ENCODE measurements at regions of chr2 and their contacts with region 1.

Region 1: GRCh38 chr2:160429248-160430000 is 64.2 kb downstream of the RBMS1 start:
- DNase-seq: peak; percentile 77
- H3K4me3 ChIP-seq: no peak overlapping the region
- H3K27ac ChIP-seq: peak overlapping the region; percentile 89
- H3K4me1 ChIP-seq: peaks cover 49% of the 10 kb centered on the region
- H3K27me3 ChIP-seq: no peaks in the 10 kb centered on the region
- CTCF ChIP-seq: peak; percentile 19 to 22
- POLR2A ChIP-seq: no peak

Region 2: GRCh38 chr2:160157861-160158829 is 271.3 kb before region 1 on chr2:
- CTCF ChIA-PET with region 1: no interaction called
- POLR2A ChIA-PET with region 1: no interaction called
- dilution Hi-C with region 1: no loop called
- intact Hi-C with region 1: loop called (anchors 5 kb)
- DNase-seq: no peak
- H3K4me3 ChIP-seq: no peak overlapping the region
- H3K27ac ChIP-seq: no peak overlapping the region
- H3K4me1 ChIP-seq: peaks cover 18% of the 10 kb centered on the region
- H3K27me3 ChIP-seq: no peaks in the 10 kb centered on the region
- CTCF ChIP-seq: no peak
- POLR2A ChIP-seq: no peak

Region 3: GRCh38 chr2:160306985-160307384 is 122.4 kb before region 1 on chr2:
- CTCF ChIA-PET with region 1: no interaction called
- POLR2A ChIA-PET with region 1: no interaction called
- dilution Hi-C with region 1: no loop called
- intact Hi-C with region 1: no loop called
- DNase-seq: no peak
- H3K4me3 ChIP-seq: no peak overlapping the region
- H3K27ac ChIP-seq: no peak overlapping the region
- H3K4me1 ChIP-seq: peaks cover 22% of the 10 kb centered on the region
- H3K27me3 ChIP-seq: no peaks in the 10 kb centered on the region
- CTCF ChIP-seq: no peak
- POLR2A ChIP-seq: no peak

Region 4: DNA sequence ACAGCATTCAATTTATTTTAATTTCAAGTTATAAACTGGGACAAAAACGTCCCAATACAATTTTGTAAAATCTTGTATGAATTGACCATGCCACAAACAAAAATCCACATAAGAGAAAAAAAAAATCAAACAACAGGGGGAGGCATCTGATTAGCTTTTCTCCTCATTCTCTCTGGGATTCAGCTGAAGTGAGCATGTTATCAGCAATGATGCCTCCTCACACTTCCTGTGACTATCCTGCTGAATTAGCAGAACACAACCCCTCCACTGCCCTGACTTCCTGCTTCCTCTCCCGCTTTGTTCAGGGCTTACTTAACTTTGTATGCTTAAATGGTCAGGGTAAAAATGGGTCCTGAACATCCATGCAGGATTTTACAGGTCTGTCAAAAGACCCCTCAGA is 97.1 kb before region 1 on chr2:
- CTCF ChIA-PET with region 1: interaction called, 31 read pairs
- POLR2A ChIA-PET with region 1: interaction called, 3 read pairs
- dilution Hi-C with region 1: no loop called
- intact Hi-C with region 1: loop called (anchors 5 kb)
- DNase-seq: peak; percentile 70
- H3K4me3 ChIP-seq: no peak overlapping the region
- H3K27ac ChIP-seq: no peak overlapping the region
- H3K4me1 ChIP-seq: peaks cover 35% of the 10 kb centered on the region
- H3K27me3 ChIP-seq: no peaks in the 10 kb centered on the region
- CTCF ChIP-seq: peak in 1 of 2 donors; percentile 1
- POLR2A ChIP-seq: no peak

Region 5: GRCh38 chr2:160406591-160407392 is 22.6 kb before region 1 on chr2:
- CTCF ChIA-PET with region 1: interaction called, 21 read pairs
- POLR2A ChIA-PET with region 1: interaction called, 4 read pairs
- dilution Hi-C with region 1: no loop called
- intact Hi-C with region 1: loop called (anchors 2 kb)
- DNase-seq: peak; percentile 77
- H3K4me3 ChIP-seq: peak overlapping the region; percentile 89 to 98 (median 95)
- H3K27ac ChIP-seq: peak overlapping the region; percentile 90
- H3K4me1 ChIP-seq: peaks cover 72% of the 10 kb centered on the region
- H3K27me3 ChIP-seq: no peaks in the 10 kb centered on the region
- CTCF ChIP-seq: no peak
- POLR2A ChIP-seq: peak; percentile 49

Region 6: DNA sequence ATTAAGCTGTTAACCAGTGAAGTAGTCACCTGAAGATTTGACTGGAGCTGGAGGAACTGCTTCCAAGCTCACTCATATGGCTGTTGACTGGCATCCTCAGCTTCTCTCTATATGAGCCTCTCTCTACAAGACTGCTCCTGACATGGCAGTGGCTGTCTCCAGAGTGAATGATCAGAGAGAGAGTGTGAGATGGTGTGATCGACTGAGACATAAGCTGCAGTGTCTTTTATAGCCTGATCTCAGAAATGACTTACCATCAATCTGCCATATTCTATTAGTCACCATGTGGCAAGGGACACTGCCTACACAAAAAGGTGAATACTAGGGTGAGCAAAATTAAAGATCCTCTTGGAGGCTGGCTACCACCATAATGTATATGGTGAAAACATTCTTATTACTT is 71.9 kb after region 1 on chr2:
- CTCF ChIA-PET with region 1: no interaction called
- POLR2A ChIA-PET with region 1: no interaction called
- dilution Hi-C with region 1: no loop called
- intact Hi-C with region 1: no loop called
- DNase-seq: no peak
- H3K4me3 ChIP-seq: no peak overlapping the region
- H3K27ac ChIP-seq: no peak overlapping the region
- H3K4me1 ChIP-seq: peaks cover 9% of the 10 kb centered on the region
- H3K27me3 ChIP-seq: no peaks in the 10 kb centered on the region
- CTCF ChIP-seq: no peak
- POLR2A ChIP-seq: no peak

Region 7: GRCh38 chr2:160666154-160667060 is 237.0 kb after region 1 on chr2:
- CTCF ChIA-PET with region 1: interaction called, 11 read pairs
- POLR2A ChIA-PET with region 1: no interaction called
- dilution Hi-C with region 1: no loop called
- intact Hi-C with region 1: no loop called
- DNase-seq: peak; percentile 99
- H3K4me3 ChIP-seq: peak overlapping the region in 1 of 3 experiments; percentile 33
- H3K27ac ChIP-seq: peak overlapping the region; percentile 89
- H3K4me1 ChIP-seq: peaks cover 14% of the 10 kb centered on the region
- H3K27me3 ChIP-seq: no peaks in the 10 kb centered on the region
- CTCF ChIP-seq: no peak
- POLR2A ChIP-seq: no peak

Region 8: DNA sequence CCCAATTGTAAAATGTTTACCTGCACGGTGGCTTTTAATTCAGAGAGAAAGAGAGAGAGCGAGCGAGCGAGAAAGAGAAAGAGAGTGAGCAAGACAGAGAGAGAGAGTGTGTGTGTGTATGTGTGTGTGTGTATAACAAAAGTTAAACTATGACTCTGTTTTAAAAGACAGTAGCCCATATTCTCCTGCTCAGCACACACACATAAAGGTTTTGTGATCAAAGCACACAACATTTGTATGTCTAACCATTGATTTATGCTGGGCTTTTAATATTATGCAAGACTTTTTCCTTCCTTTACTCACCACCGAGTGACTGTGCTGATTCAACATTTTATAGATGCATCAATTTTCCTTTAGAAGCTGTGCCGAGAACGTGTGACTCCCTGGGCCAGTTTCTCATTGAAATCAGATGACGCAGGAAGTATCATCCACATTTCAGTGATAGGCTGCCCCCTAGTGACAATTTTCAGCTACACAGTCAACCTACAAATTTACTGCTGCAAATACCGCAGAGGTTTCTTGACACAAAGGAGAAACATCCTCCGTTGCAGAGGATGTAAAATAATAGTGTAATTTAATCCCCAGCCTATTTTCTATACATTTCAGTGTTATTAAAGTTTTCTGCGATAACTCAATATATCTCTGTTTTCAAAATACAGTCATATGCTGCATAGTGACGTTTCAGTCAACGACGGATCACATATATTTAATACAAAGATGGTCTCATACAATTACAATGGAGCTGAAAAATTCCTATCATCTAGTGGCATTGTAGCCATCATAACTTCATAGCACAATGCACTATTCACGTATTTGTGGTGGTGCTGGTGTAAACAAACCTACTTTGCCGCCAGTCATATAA is 564.9 kb after region 1 on chr2:
- CTCF ChIA-PET with region 1: interaction called, 28 read pairs
- POLR2A ChIA-PET with region 1: no interaction called
- dilution Hi-C with region 1: no loop called
- intact Hi-C with region 1: no loop called
- DNase-seq: peak; percentile 86
- H3K4me3 ChIP-seq: no peak overlapping the region
- H3K27ac ChIP-seq: no peak overlapping the region
- H3K4me1 ChIP-seq: peaks cover 2% of the 10 kb centered on the region
- H3K27me3 ChIP-seq: no peaks in the 10 kb centered on the region
- CTCF ChIP-seq: peak; percentile 58 to 70
- POLR2A ChIP-seq: no peak

Measured in endothelial cell of umbilical vein (primary cell).